Testis (tissue), 5 donors: ENCODE measurements at regions of chr4 and their contacts with region 1.

Region 1: DNA sequence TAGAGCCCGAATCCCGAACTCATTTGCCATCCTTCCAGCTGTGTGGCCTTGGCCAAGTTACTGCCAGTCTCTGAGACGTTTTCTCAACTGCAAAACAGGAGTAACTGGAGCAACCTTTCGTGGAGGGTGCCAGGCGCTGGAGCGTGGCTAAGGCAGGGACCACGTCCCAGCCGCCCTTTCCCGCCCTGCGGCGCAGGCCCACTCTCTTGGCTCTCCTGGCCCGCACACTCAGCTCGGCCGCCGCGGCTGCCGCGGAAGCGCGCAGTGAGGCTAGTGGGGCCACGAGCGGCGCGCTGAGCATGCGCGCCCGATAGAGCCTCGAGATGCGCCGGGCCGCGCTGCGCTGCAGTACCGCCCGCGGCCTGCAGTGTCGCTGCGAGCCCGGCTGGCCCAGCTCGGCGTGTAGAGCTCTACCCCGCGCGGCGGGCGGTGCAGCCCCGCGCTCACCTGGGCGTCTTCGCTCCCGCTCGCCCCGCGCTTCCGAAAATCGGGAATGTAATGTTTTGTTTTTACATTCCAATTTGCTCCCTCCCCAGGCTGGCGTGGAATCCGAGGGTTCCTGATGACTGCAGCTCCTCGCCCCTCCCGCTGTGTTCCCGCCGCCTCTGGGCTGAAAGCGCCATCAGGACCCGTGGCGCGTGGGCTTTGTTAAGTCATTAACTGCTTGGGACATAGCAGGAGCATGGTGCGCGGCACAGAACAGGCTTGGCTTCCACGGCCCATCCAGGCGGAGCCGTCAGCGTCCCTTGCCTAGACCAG is 4.0 kb upstream of the ZNF518B start:
- DNase-seq: peak; percentile 83
- H3K4me3 ChIP-seq: peak overlapping the region; percentile 42 to 54
- H3K27ac ChIP-seq: no peak overlapping the region
- H3K4me1 ChIP-seq: peaks cover under 1% of the 10 kb centered on the region
- H3K27me3 ChIP-seq: no peaks in the 10 kb centered on the region
- CTCF ChIP-seq: peak; percentile 97 to 99 (median 97)
- POLR2A ChIP-seq: no peak

Region 2: DNA sequence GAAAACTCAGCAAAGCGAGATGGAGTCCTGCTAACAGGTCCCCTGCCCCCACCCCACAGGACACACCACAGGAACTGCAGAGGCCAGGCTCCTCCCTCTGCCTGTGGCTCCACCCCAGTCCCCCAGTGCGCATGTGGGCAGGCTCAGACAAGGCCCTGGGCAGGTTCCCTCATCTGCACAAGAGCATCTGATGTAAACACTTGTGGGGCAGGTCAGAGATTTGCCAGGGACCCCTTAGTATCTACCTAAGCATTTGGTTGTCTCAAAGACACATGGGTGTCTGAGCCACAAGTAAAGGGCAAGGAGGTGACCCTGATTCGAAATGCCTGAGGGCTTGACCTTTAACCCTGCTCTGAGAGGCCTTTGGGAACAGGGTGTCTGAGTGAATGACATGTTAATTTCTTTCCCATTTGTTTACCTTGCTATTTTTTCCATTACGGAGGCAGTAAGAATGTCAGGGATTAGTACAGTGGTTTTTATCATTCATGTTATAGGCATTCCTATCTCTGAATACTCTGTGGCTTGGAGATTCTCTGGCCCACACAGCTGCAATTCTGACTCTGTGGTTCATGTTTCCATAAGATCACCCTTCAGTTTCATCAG is 89.3 kb before region 1 on chr4:
- intact Hi-C with region 1: no loop called
- DNase-seq: no peak
- H3K4me3 ChIP-seq: no peak overlapping the region
- H3K27ac ChIP-seq: no peak overlapping the region
- H3K4me1 ChIP-seq: no peaks in the 10 kb centered on the region
- H3K27me3 ChIP-seq: no peaks in the 10 kb centered on the region
- CTCF ChIP-seq: no peak
- POLR2A ChIP-seq: no peak

Region 3: GRCh38 chr4:10530137-10530786 is 69.0 kb after region 1 on chr4:
- intact Hi-C with region 1: loop called (anchors 10 kb)
- DNase-seq: peak; percentile 48
- H3K4me3 ChIP-seq: no peak overlapping the region
- H3K27ac ChIP-seq: peak overlapping the region; percentile 56 to 86
- H3K4me1 ChIP-seq: peaks cover 31% of the 10 kb centered on the region
- H3K27me3 ChIP-seq: no peaks in the 10 kb centered on the region
- CTCF ChIP-seq: no peak
- POLR2A ChIP-seq: no peak

Region 4: GRCh38 chr4:10565166-10565780 is 104.0 kb after region 1 on chr4:
- intact Hi-C with region 1: no loop called
- DNase-seq: no peak
- H3K4me3 ChIP-seq: no peak overlapping the region
- H3K27ac ChIP-seq: no peak overlapping the region
- H3K4me1 ChIP-seq: no peaks in the 10 kb centered on the region
- H3K27me3 ChIP-seq: no peaks in the 10 kb centered on the region
- CTCF ChIP-seq: no peak
- POLR2A ChIP-seq: no peak

Region 5: GRCh38 chr4:11053601-11054220 is 592.4 kb after region 1 on chr4:
- intact Hi-C with region 1: no loop called
- DNase-seq: no peak
- H3K4me3 ChIP-seq: no peak overlapping the region
- H3K27ac ChIP-seq: no peak overlapping the region
- H3K4me1 ChIP-seq: no peaks in the 10 kb centered on the region
- H3K27me3 ChIP-seq: no peaks in the 10 kb centered on the region
- CTCF ChIP-seq: no peak
- POLR2A ChIP-seq: no peak